ENCODE measurements at regions of chr15 and their contacts with region 1.

Region 1: GRCh38 chr15:66356345-66357236 is at the start of gene TIPIN:
- DNase-seq: peak; percentile 99
- H3K4me3 Mint-ChIP-seq: peak within 1 kb of the TSS; percentile 93
- H3K27ac Mint-ChIP-seq: peak within 1 kb of the TSS; percentile 96
- H3K4me1 Mint-ChIP-seq: peaks cover 23% of the 10 kb centered on the region
- H3K27me3 Mint-ChIP-seq: no peaks in the 10 kb centered on the region
- total RNA-seq, gene TIPIN: 56.2 and 60.0 TPM in 2 replicates

Region 2: GRCh38 chr15:66293419-66294156 is 63.0 kb before region 1 on chr15 and contains the start of gene DIS3L:
- intact Hi-C with region 1: loop called (anchors 5 kb)
- DNase-seq: peak; percentile 93
- H3K4me3 Mint-ChIP-seq: peak within 1 kb of the TSS; percentile 92
- H3K27ac Mint-ChIP-seq: peak within 1 kb of the TSS; percentile 94
- H3K4me1 Mint-ChIP-seq: peaks cover 40% of the 10 kb centered on the region
- H3K27me3 Mint-ChIP-seq: peaks cover 2% of the 10 kb centered on the region
- total RNA-seq, gene DIS3L: 48.6 and 57.2 TPM in 2 replicates

Region 3: DNA sequence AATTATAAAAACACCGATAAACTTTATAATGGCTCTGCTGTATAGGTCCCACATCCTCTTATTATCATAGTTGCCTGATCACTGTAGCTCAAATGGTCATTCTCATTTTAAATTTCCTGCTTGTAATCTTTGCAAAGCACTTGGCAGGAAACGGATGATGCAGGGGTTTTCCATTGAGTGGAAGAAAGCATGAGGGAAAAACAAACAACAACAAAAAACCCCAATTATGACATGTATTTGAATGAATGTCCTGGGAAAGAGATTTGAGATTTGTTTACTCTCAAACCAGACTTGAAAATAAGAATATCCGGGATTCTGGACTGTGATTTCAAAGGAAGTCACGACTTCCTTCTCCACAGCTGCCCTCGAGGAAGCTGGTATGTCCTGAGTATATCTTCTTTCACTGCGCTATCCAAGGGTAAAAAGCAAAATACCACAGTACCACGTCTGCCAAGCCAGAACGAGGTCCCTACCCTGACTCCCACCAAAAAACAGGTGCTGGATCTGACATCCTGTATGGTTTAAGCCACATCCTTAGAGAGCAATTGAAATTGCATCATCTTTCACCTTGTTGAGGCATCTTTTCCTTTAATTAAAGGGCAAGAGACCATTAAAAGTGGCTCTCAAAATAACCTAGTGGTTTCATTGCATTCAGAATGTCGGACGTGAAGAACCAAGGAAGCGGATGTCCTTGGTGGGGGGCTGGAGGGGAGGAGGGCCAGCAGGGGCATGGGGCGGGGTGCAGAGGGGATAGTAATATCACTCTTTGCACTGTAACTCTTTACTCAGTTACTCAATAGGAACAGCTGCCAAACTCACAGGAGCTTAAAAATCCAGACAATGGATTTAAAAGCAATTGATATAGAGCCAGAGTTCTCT is 13.4 kb after region 1 on chr15:
- intact Hi-C with region 1: loop called (anchors 1 kb)
- DNase-seq: peak; percentile 82
- H3K4me3 Mint-ChIP-seq: peak overlapping the region; percentile 80
- H3K27ac Mint-ChIP-seq: peak overlapping the region; percentile 96
- H3K4me1 Mint-ChIP-seq: peaks cover 14% of the 10 kb centered on the region
- H3K27me3 Mint-ChIP-seq: no peaks in the 10 kb centered on the region

Region 4: GRCh38 chr15:66497502-66498455 is 141.2 kb after region 1 on chr15 and contains the start of gene SNAPC5:
- intact Hi-C with region 1: loop called (anchors 1 kb)
- DNase-seq: peak; percentile 100
- H3K4me3 Mint-ChIP-seq: peak within 1 kb of the TSS; percentile 95
- H3K27ac Mint-ChIP-seq: peak within 1 kb of the TSS; percentile 97
- H3K4me1 Mint-ChIP-seq: peaks cover 47% of the 10 kb centered on the region
- H3K27me3 Mint-ChIP-seq: no peaks in the 10 kb centered on the region
- total RNA-seq, gene SNAPC5: 33.5 and 33.9 TPM in 2 replicates

Region 5: DNA sequence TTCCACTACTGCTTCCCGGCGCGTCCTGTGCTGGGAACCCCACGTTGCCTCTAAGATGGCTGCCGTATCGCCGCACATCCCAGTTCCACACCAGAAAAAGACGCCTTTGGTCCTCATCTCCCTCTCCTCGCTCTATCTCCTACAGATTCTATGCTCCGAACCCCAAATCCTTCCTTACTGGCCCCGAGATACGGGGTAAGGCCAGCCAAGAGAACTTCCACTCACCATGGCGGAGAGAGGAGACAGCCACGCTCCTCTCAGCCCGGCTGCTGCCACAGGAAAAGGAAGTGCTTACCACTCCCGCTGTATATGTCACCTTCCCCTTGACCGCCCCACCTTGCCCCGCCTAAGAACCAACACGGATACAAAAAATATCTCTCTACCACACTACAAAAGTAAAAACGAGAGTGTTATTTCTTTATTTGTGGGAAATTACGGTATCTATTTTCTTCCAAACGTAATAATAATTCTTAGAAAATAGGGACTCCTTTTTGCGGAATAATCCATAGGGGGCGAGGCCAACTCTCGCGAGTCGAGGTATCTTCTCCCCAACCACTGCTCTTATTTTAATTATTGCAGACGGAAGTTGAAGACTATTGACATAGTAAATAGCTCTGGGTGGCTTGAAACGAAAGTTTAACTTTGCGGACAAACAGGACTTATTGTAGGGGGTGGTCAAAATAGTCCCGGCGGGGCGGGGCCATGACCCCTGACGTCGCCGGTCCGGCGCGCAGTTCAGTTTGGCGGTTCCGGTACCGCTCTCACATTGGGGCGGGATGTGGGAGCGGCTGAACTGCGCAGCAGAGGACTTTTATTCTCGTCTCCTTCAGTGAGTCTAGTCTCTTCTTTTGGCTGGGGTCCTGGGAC is 148.2 kb after region 1 on chr15 and contains the starts of genes RPL4 and ZWILCH:
- intact Hi-C with region 1: loop called (anchors 1 kb)
- DNase-seq: peak; percentile 95
- H3K4me3 Mint-ChIP-seq: peak within 1 kb of the TSS; percentile 92
- H3K27ac Mint-ChIP-seq: peak within 1 kb of the TSS; percentile 98
- H3K4me1 Mint-ChIP-seq: peaks cover 48% of the 10 kb centered on the region
- H3K27me3 Mint-ChIP-seq: no peaks in the 10 kb centered on the region
- total RNA-seq, gene RPL4: 3,393 and 3,435 TPM in 2 replicates
- total RNA-seq, gene ZWILCH: 37.1 and 41.1 TPM in 2 replicates